ENCODE measurements at regions of chr1 and their contacts with region 1.

Region 1: DNA sequence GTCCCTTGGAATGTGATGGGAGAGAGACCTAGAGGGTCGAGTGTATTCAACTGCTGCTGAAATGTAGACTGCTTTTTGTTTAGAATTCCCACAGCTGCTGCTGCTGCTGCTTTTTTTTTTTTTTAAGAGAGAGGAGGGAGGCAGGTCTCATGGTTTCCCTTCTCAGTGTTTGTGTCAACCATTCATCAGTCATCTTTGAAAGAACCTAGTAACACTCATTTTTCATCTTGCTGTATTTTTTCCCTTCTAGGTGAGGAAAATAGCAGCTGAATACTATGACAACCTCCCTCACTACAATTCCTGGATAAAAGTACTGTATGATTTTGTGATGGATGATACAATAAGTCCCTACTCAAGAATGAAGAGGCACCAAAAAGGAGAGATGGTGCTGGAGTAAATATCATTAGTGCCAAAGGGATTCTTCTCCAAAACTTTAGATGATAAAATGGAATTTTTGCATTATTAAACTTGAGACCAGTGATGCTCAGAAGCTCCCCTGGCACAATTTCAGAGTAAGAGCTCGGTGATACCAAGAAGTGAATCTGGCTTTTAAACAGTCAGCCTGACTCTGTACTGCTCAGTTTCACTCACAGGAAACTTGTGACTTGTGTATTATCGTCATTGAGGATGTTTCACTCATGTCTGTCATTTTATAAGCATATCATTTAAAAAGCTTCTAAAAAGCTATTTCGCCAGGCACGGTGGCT is 9.2 kb downstream of the DEGS1 start:
- DNase-seq: no peak
- ATAC-seq: peak; percentile 83
- H3K4me3 Mint-ChIP-seq: no peak overlapping the region
- H3K27ac Mint-ChIP-seq: peak overlapping the region; percentile 83
- H3K4me1 Mint-ChIP-seq: peaks cover 31% of the 10 kb centered on the region
- H3K27me3 Mint-ChIP-seq: no peaks in the 10 kb centered on the region
- CTCF ChIP-seq: no peak

Region 2: GRCh38 chr1:223819730-223820514 is 372.3 kb before region 1 on chr1:
- CTCF ChIA-PET with region 1: no interaction called
- POLR2A ChIA-PET with region 1: no interaction called
- intact Hi-C with region 1: no loop called
- DNase-seq: no peak
- ATAC-seq: no peak
- H3K4me3 Mint-ChIP-seq: no peak overlapping the region
- H3K27ac Mint-ChIP-seq: no peak overlapping the region
- H3K4me1 Mint-ChIP-seq: peaks cover 37% of the 10 kb centered on the region
- H3K27me3 Mint-ChIP-seq: no peaks in the 10 kb centered on the region
- CTCF ChIP-seq: no peak

Region 3: DNA sequence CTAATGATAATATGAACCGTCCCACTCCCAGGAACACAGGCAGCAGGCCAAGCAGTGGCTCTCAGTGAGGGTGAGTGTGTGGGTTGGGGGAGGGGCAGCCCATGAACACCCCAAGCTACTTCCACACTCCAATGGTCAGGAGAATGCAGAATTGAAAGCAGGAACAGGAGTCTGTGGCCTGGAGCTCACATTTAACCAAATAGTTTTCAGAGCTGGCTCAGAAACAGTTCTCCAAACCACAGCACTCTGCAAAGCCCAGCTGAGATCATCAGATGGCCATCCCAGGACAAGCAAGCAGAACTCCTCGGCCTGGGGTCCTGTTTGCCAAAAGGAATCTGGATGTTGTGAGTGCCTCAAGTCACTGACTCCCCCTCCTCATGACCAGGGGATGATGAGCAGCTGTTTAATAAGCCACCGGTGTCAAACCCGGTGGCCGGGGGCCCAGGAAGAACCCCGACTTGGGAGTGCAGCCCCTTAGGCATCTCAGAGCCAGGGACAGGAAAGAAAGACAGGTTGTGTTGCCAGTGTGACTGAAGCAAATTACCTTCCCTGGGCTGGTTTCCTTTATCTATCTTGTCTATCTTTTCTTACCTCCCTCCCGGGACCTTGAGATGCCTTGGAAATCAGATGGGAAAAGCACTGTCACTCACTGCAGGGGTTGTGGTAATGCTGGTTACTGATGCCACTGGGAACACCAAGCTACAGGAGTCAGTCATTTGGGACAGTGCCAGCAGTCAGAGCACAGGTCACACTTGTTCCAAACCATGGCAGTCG is 11.2 kb after region 1 on chr1:
- CTCF ChIA-PET with region 1: interaction called, 5 read pairs
- POLR2A ChIA-PET with region 1: interaction called, 6 read pairs
- intact Hi-C with region 1: loop called (anchors 1 kb)
- DNase-seq: no peak
- ATAC-seq: no peak
- H3K4me3 Mint-ChIP-seq: no peak overlapping the region
- H3K27ac Mint-ChIP-seq: no peak overlapping the region
- H3K4me1 Mint-ChIP-seq: peaks cover 11% of the 10 kb centered on the region
- H3K27me3 Mint-ChIP-seq: no peaks in the 10 kb centered on the region
- CTCF ChIP-seq: no peak

Measured in activated CD8-positive, alpha-beta T cell treated with anti-CD3 and anti-CD28 coated beads for 36 hours (primary cell).